Transverse colon (tissue), 4 donors: ENCODE measurements at regions of chr11 and their contacts with region 1.

Region 1: DNA sequence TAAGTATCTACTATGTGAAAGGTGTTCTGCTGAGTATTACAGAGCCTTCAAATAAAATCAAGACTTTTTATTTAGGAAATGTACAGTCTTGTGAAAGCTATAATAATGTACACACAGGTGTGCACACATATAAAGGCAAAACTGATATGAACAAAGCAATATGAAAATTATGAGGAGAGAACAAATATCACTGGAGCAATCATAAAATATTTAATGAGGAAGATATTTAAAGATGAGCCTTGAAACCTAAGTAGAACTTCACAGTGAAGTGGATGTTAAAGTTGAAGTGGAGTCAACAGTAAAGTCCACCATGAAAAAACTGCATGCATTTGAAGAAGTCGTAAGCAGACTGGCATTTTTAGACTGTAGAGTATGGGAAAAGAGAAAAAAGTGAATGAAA is 18.5 kb downstream of the OR51F1 start:
- DNase-seq: no peak
- H3K4me3 ChIP-seq: no peak overlapping the region
- H3K27ac ChIP-seq: no peak overlapping the region
- H3K4me1 ChIP-seq: no peaks in the 10 kb centered on the region
- H3K27me3 ChIP-seq: no peaks in the 10 kb centered on the region
- CTCF ChIP-seq: no peak
- EP300 ChIP-seq: no peak
- POLR2A ChIP-seq: no peak

Region 2: GRCh38 chr11:4049006-4049405 is 702.2 kb before region 1 on chr11:
- in situ Hi-C with region 1: no loop called
- intact Hi-C with region 1: no loop called
- DNase-seq: no peak
- H3K4me3 ChIP-seq: no peak overlapping the region
- H3K27ac ChIP-seq: no peak overlapping the region
- H3K4me1 ChIP-seq: peaks cover 0 to 14% (median 0%) of the 10 kb centered on the region in 4 donors
- H3K27me3 ChIP-seq: no peaks in the 10 kb centered on the region
- CTCF ChIP-seq: no peak
- EP300 ChIP-seq: no peak
- POLR2A ChIP-seq: no peak

Region 3: GRCh38 chr11:5703741-5704536 is 952.7 kb after region 1 on chr11:
- in situ Hi-C with region 1: no loop called
- intact Hi-C with region 1: loop called (anchors 5 kb)
- DNase-seq: no peak
- H3K4me3 ChIP-seq: no peak overlapping the region
- H3K27ac ChIP-seq: no peak overlapping the region
- H3K4me1 ChIP-seq: no peaks in the 10 kb centered on the region
- H3K27me3 ChIP-seq: no peaks in the 10 kb centered on the region
- CTCF ChIP-seq: no peak
- EP300 ChIP-seq: no peak
- POLR2A ChIP-seq: no peak